HCT116 (cell line): ENCODE measurements at regions of chr3 and their contacts with region 1.

Region 1: GRCh38 chr3:170961616-170962400 is 53.4 kb upstream of the EIF5A2 start:
- DNase-seq: peak; percentile 34
- ATAC-seq: peak; percentile 55
- H3K4me3 ChIP-seq: no peak overlapping the region
- H3K27ac ChIP-seq: no peak overlapping the region
- H3K4me1 ChIP-seq: no peaks in the 10 kb centered on the region
- H3K27me3 ChIP-seq: no peaks in the 10 kb centered on the region
- CTCF ChIP-seq: peak; percentile 37 to 85 (median 73)
- POLR2A ChIP-seq: no peak
- RAD21 ChIP-seq: peak; percentile 79

Region 2: DNA sequence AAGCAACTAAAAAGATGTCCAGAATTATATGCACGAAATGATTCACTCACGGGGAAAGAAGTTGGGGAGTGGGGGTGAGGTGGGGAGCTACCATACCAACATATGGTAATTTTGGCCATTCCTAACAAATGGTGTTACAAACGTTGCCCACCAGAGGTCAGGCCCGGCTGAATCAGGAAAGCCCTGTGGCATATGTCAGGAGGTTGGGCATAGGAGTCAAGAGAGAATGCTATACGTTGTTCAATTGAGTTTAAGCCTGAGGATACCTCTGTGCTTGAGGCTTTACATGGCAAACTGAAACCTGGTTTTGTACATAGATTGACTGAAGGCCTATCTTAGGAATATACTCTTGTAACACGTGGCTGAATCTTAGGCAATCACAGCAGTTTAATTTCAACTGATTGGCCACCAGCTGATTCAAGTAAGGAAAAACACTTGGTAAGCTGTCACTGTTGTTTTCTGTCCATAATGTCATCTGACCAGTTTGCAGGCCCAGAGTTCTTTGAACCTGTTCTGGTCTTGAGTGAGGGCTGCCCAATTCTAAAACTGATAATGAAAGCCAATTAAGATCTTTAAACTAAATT is 88.1 kb after region 1 on chr3:
- CTCF ChIA-PET with region 1: interaction called, 15 read pairs
- POLR2A ChIA-PET with region 1: no interaction called
- RAD21 ChIA-PET with region 1: interaction called, 3 to 4 read pairs
- intact Hi-C with region 1: no loop called
- DNase-seq: peak; percentile 45
- ATAC-seq: peak; percentile 96
- H3K4me3 ChIP-seq: no peak overlapping the region
- H3K27ac ChIP-seq: no peak overlapping the region
- H3K4me1 ChIP-seq: peaks cover under 1 to 4% of the 10 kb centered on the region in 2 experiments
- H3K27me3 ChIP-seq: no peaks in the 10 kb centered on the region
- CTCF ChIP-seq: peak; percentile 62 to 77 (median 68); a peak in 5 of 6 replicates
- POLR2A ChIP-seq: no peak
- RAD21 ChIP-seq: peak; percentile 90

Region 3: DNA sequence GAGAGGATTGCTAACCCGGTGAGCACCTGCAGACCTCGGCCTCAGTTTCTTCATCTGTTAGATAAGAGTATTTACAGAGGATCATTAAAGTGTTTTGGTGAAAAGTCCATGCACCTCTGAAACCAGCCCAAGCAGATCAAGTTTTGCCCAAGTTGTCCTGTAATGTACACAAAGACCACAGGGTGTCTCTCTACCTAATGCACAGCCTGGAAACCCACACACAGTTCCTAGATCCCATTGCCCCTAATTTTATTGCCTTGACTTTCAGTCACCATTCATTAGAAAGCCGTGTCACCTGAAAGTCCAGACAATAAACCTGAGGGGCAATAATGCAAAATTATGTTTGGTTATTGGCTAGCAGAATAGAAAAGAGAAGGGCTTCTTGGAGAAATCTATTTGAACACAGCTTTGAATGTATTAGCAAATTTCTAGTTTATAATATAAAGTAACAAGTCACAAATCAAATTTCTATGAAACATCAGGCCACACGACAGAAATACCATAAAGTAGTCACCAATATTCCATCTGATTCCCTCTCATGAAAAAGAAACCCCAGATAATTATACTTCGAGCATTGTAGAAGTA is 226.0 kb after region 1 on chr3:
- CTCF ChIA-PET with region 1: interaction called, 6 read pairs
- POLR2A ChIA-PET with region 1: no interaction called
- RAD21 ChIA-PET with region 1: no interaction called
- intact Hi-C with region 1: loop called (anchors 1 kb)
- DNase-seq: no peak
- ATAC-seq: peak; percentile 57
- H3K4me3 ChIP-seq: no peak overlapping the region
- H3K27ac ChIP-seq: no peak overlapping the region
- H3K4me1 ChIP-seq: peaks cover 24 to 30% of the 10 kb centered on the region in 2 experiments
- H3K27me3 ChIP-seq: no peaks in the 10 kb centered on the region
- CTCF ChIP-seq: peak; percentile 59 to 72 (median 71); a peak in 5 of 6 replicates
- POLR2A ChIP-seq: no peak
- RAD21 ChIP-seq: peak; percentile 87

Region 4: DNA sequence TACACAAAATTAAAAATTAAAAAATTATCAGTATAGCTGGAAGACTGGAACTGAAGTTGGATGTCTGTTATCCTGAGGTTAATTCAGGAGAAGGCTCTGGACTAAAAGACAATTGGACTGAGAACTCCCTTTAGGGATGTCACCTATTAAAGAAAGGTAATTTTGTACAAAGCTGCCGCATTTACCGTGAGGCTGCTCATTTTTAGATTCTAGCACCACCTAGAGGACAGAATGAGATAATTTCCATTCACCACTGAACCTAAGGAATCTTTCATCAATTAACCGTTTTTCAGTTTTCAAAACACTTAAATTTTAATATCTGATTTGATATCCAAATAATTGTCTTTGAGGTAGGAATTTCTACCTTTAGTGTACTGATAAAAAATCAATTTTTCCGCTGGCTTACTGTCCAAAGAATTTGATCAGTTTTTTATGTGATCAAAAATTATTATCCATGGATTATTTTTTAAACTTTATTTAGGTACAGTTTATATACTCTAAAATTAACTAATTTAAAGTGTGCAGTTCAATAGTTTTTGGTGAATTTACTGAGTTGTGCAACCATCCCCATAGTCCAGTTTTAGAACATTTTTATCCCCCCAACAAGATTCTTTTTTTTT is 605.1 kb after region 1 on chr3:
- CTCF ChIA-PET with region 1: interaction called, 19 read pairs
- POLR2A ChIA-PET with region 1: no interaction called
- RAD21 ChIA-PET with region 1: no interaction called
- intact Hi-C with region 1: loop called (anchors 1 kb)
- DNase-seq: peak; percentile 28
- ATAC-seq: peak; percentile 69
- H3K4me3 ChIP-seq: no peak overlapping the region
- H3K27ac ChIP-seq: no peak overlapping the region
- H3K4me1 ChIP-seq: no peaks in the 10 kb centered on the region
- H3K27me3 ChIP-seq: no peaks in the 10 kb centered on the region
- CTCF ChIP-seq: peak; percentile 53 to 82 (median 72)
- POLR2A ChIP-seq: no peak
- RAD21 ChIP-seq: peak; percentile 95

Region 5: GRCh38 chr3:171646357-171647133 is 684.7 kb after region 1 on chr3:
- CTCF ChIA-PET with region 1: no interaction called
- POLR2A ChIA-PET with region 1: no interaction called
- RAD21 ChIA-PET with region 1: no interaction called
- intact Hi-C with region 1: loop called (anchors 10 kb)
- DNase-seq: peak; percentile 36
- ATAC-seq: peak; percentile 49; the same call in 1 of the 2 replicates
- H3K4me3 ChIP-seq: no peak overlapping the region
- H3K27ac ChIP-seq: no peak overlapping the region
- H3K4me1 ChIP-seq: no peaks in the 10 kb centered on the region
- H3K27me3 ChIP-seq: no peaks in the 10 kb centered on the region
- CTCF ChIP-seq: peak; percentile 45 to 69 (median 58)
- POLR2A ChIP-seq: no peak
- RAD21 ChIP-seq: peak; percentile 79

Region 6: GRCh38 chr3:172341482-172342059 is 1379.8 kb after region 1 on chr3:
- CTCF ChIA-PET with region 1: no interaction called
- POLR2A ChIA-PET with region 1: no interaction called
- RAD21 ChIA-PET with region 1: no interaction called
- intact Hi-C with region 1: loop called (anchors 10 kb)
- DNase-seq: peak; percentile 48
- ATAC-seq: peak; percentile 80
- H3K4me3 ChIP-seq: no peak overlapping the region
- H3K27ac ChIP-seq: no peak overlapping the region
- H3K4me1 ChIP-seq: no peaks in the 10 kb centered on the region
- H3K27me3 ChIP-seq: no peaks in the 10 kb centered on the region
- CTCF ChIP-seq: peak; percentile 50 to 67 (median 57); a peak in 5 of 6 replicates
- POLR2A ChIP-seq: no peak
- RAD21 ChIP-seq: peak; percentile 77